Breast epithelium (tissue), 4 donors: ENCODE measurements at regions of chr19 and their contacts with region 1.

Region 1: GRCh38 chr19:31139871-31140505 is 209.2 kb downstream of the TSHZ3 start:
- DNase-seq: no peak
- H3K4me3 ChIP-seq: no peak overlapping the region
- H3K27ac ChIP-seq: no peak overlapping the region
- H3K4me1 ChIP-seq: no peaks in the 10 kb centered on the region
- H3K27me3 ChIP-seq: no peaks in the 10 kb centered on the region
- CTCF ChIP-seq: no peak
- POLR2A ChIP-seq: no peak

Region 2: GRCh38 chr19:31110331-31110730 is 29.7 kb before region 1 on chr19:
- intact Hi-C with region 1: no loop called
- DNase-seq: no peak
- H3K4me3 ChIP-seq: no peak overlapping the region
- H3K27ac ChIP-seq: no peak overlapping the region
- H3K4me1 ChIP-seq: no peaks in the 10 kb centered on the region
- H3K27me3 ChIP-seq: peaks cover 0 to 4% of the 10 kb centered on the region in 2 donors
- CTCF ChIP-seq: no peak
- POLR2A ChIP-seq: no peak

Region 3: GRCh38 chr19:31249217-31249616 is 109.2 kb after region 1 on chr19:
- intact Hi-C with region 1: loop called (anchors 10 kb)
- DNase-seq: no peak
- H3K4me3 ChIP-seq: no peak overlapping the region
- H3K27ac ChIP-seq: no peak overlapping the region
- H3K4me1 ChIP-seq: no peaks in the 10 kb centered on the region
- H3K27me3 ChIP-seq: no peaks in the 10 kb centered on the region
- CTCF ChIP-seq: no peak
- POLR2A ChIP-seq: no peak

Region 4: DNA sequence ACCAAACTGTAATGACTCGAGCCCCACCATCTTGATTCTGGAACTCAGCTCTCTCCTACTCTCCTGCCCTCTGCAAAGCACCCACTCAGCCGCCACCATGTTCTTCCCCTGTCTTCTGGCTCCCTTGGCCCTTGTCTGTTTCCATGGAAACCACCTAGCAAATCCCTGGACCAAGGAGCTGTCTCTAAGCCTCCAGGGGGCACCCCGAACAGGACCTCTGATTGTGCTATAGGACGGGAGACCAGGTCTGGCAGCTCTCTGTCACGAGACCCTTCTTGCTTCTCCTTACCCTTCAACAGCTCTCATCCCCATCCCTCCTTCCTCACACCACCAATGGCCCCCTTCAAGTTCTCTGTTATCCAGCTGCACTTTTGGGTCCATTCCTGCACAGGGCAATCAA is 927.7 kb after region 1 on chr19:
- intact Hi-C with region 1: no loop called
- DNase-seq: no peak
- H3K4me3 ChIP-seq: no peak overlapping the region
- H3K27ac ChIP-seq: no peak overlapping the region
- H3K4me1 ChIP-seq: no peaks in the 10 kb centered on the region
- H3K27me3 ChIP-seq: no peaks in the 10 kb centered on the region
- CTCF ChIP-seq: no peak
- POLR2A ChIP-seq: no peak